ENCODE measurements at regions of chr2 and their contacts with region 1.

Region 1: DNA sequence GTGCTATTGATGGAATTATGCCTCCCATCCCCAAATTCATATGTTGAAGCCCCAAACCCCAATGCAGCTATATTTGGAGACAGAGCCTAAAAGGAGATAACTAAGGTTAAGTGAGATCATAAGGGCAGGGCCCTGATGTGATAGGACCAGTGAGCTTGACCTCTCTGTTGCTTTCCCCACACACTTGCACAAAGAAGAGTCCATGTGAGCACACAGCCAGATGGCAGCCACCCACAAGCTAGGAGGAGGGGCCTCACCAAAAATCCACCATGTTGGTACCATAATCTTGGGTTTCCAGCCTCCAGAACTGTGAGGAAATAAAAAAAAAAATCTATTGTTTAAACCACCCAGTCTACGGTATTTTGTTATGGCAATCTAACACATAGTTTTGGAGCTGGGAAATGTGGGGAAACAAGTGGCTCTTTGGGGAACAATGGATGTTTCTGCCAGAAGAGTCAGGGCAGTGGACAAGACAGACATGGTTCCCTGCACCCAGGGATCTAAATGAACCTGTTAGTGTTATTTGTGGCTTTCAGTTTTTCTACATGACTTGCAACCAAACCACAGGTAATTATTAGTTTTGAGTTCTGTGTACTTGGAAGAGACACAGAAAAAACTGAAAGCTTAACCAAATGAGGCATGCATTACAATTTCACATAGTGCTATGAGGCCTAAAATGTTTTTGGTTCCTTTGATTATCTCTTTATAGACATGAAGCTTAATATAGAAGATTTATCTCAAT is 259.1 kb downstream of the LTBP1 start:
- DNase-seq: no peak
- ATAC-seq: no peak

Region 2: DNA sequence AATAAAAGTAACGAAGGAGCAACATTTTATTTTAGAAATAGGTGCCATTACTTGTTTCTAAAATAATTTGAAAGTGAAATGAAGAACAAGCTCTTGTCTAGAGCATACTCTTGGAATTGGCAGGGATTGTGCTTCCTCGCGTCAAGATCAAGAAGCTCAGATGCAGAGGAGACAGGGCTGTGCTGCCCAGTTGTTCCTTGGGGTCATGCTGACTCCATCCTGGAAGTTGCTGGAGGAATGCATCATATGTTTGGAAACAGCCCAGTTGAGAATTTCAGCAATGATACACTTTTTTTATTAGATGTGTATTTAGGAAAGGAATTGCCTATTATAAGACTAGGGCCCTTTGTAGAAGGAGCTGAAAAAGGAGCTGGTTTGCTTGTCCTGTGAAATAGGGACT is 241.9 kb before region 1 on chr2:
- intact Hi-C with region 1: no loop called
- DNase-seq: no peak
- ATAC-seq: no peak

Region 3: GRCh38 chr2:33145459-33145858 is 60.4 kb before region 1 on chr2:
- intact Hi-C with region 1: no loop called
- DNase-seq: no peak
- ATAC-seq: peak; percentile 86

Region 4: GRCh38 chr2:33250417-33251029 is 44.7 kb after region 1 on chr2:
- intact Hi-C with region 1: loop called (anchors 2 kb)
- DNase-seq: no peak
- ATAC-seq: no peak

Region 5: DNA sequence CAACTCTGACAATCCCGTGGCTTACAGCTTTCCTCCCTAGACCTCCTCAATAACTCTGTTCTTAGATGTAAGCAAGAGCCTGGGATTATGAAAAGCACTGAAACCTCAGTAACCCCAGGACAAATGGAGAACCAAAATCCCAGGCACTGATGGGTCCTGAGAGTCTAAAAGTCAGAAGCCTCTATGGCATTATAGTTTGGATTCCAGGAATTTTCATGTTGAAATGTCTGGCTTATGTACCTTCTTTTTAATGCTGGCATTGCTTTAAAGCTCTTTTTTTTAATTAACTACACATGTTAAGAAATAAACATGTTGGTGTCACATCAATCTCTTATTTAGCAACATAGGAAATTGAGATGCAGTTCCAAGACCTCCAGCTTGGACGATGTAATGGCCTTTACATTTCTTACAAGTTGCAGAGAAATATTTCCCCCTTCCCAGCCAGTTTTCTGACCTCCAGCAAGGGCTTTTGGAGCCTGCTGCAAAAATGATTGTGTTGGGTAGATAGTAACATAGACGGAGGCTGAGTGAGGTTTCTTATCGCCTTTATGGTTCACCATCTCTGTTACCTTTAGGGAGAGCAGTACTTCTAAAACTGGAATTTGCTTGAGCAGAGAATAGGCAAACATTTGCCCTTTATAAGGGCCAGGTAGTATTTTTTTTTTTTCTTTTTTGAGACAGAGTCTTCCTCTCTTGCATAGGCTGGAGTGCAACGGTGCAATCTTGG is 185.8 kb after region 1 on chr2:
- intact Hi-C with region 1: no loop called
- DNase-seq: no peak
- ATAC-seq: peak; percentile 67

Measured in sciatic nerve (tissue), 2 donors.